ENCODE measurements at regions of chr11 and their contacts with region 1.

Region 1: DNA sequence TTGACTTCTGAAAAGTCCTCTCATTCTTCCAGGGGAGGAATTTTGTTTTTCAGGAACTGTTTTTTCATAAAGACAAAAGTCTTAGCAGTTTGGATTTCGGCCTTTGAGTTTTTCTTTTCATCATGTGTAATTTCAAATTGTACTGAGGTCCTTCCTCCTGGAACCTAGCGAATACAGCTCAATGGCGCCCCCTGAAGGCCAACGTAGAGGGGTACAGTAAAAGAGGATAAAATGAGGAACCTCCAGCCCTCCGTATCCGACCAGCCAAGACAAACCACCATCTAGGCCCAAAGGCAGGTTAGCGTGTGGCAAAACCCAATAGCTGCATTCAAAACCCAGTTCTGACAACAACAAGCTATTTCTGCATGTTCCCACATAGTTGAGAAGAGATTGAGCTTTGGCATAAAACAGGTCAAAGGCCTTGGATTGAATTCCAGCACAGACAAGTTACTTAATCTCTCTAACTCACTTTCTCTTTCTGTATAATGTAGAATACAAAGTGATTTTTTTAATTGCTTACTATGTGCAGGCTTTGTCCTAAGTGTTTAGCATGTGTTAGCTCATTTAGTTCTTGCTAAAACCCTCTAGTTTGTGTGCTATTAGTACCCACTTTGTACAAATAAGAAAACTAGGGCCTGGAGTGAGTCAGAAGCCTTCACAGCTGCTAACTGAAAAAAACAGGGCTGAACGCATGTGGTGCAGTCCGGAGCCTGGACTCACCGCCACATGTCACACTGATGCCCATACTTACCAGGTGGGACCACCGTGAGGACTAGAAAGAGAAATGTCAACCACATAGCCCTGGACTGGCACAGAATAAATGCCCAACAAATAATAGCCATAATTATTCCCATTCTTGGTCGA is 43.2 kb upstream of the ETS1 start:
- DNase-seq: peak; percentile 93
- H3K4me3 Mint-ChIP-seq: peak overlapping the region; percentile 68
- H3K27ac Mint-ChIP-seq: peak overlapping the region; percentile 80
- H3K4me1 Mint-ChIP-seq: peaks cover 66% of the 10 kb centered on the region
- H3K27me3 Mint-ChIP-seq: peaks cover 3% of the 10 kb centered on the region

Region 2: GRCh38 chr11:128195057-128195751 is 435.4 kb before region 1 on chr11:
- CTCF ChIA-PET with region 1: interaction called, 34 read pairs
- DNase-seq: peak; percentile 74
- H3K4me3 Mint-ChIP-seq: no peak overlapping the region
- H3K27ac Mint-ChIP-seq: peak overlapping the region; percentile 2
- H3K4me1 Mint-ChIP-seq: peaks cover 47% of the 10 kb centered on the region
- H3K27me3 Mint-ChIP-seq: no peaks in the 10 kb centered on the region

Region 3: GRCh38 chr11:128463371-128463829 is 167.2 kb before region 1 on chr11:
- CTCF ChIA-PET with region 1: interaction called, 11 read pairs
- DNase-seq: no peak
- H3K4me3 Mint-ChIP-seq: peak overlapping the region; percentile 36
- H3K27ac Mint-ChIP-seq: peak overlapping the region; percentile 92
- H3K4me1 Mint-ChIP-seq: peaks cover 93% of the 10 kb centered on the region
- H3K27me3 Mint-ChIP-seq: no peaks in the 10 kb centered on the region

Region 4: GRCh38 chr11:128497061-128497775 is 133.4 kb before region 1 on chr11:
- CTCF ChIA-PET with region 1: interaction called, 16 read pairs
- DNase-seq: no peak
- H3K4me3 Mint-ChIP-seq: peak overlapping the region; percentile 69
- H3K27ac Mint-ChIP-seq: peak overlapping the region; percentile 91
- H3K4me1 Mint-ChIP-seq: peaks cover 97% of the 10 kb centered on the region
- H3K27me3 Mint-ChIP-seq: no peaks in the 10 kb centered on the region

Region 5: DNA sequence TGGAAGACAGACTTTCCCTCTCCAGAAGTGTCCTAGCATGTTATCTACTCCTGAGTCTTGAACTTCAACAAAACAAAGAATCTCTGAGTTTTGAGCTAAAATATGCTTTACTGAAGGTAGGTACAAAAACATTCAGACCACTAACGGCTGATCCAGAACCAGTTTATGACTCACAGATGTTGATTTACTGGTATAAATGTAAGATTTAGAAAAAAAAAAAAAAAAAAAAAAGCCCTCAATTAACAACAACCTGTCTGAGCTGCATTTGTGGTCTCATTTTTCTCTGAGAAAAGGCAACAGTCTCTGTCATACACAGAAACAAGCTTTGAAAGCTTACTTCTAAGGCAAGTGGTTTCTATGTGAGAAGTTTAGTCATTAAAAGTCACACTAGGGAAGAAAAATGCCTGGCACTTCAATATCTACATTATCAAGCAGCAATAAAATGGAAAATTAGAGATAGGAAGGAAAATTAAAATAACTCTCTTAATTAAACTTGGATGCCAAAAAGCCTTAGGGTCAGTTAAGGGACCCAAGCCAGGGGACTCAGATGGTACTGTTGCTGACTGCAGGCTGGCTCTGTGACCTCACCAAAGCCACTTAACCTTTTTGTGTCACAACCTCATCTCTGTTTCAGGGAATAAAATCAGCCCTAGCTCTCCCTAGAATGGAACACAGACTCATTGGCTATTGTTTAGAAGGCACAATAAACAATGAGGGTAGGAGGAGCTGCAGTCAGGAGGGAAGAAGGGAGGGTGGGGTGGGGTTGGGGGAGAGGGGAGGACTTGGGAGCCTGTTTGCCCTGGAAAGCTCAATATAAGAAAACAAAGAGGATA is 105.0 kb before region 1 on chr11:
- CTCF ChIA-PET with region 1: interaction called, 11 read pairs
- DNase-seq: peak; percentile 58
- H3K4me3 Mint-ChIP-seq: peak overlapping the region; percentile 59
- H3K27ac Mint-ChIP-seq: peak overlapping the region; percentile 100
- H3K4me1 Mint-ChIP-seq: peaks cover 71% of the 10 kb centered on the region
- H3K27me3 Mint-ChIP-seq: no peaks in the 10 kb centered on the region

Region 6: DNA sequence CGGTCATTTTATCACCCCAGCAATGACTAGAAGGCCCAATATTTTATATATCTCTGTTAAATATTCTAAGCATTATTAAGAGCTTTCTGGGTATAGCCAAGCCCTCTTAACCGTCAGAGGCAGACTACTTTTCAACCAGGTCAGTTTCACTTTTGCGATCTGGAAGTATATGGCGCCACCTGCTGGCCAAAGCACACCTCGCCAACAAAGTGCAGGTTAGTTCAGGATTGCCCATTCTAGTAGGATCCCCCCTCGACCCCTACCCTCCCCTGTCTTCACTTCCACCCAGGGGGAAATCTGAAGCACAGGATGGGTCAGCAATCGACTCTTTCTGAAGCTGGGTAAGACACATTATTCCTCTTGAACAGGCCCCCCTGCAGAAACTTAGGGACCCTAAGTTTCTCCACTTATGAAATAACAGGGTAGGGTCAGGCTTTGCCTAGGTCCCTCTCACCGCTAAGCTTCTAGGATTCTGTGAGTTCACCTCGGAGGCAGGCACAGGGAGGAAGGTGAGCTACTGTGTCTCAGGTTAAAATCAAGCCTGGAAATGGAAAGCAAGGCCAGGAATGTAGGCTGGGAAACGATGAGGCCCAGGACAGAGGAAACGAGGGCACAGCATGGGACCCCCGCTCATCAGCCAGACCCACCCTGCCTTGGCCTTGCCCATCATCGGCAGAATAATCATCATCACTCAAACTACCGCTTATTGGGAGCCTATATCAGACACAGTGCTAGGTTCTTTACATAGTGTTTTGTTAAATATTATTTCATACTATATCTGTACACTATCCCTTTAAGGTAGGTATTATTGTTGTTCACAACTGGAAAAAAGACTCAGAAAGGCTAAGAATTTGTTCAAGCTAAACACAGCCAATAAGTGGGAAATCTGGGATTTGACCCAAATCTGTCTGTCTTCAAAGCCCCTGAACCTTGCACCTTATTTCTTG is 200.8 kb after region 1 on chr11:
- CTCF ChIA-PET with region 1: interaction called, 77 read pairs
- DNase-seq: peak; percentile 91
- H3K4me3 Mint-ChIP-seq: peak overlapping the region; percentile 33
- H3K27ac Mint-ChIP-seq: peak overlapping the region; percentile 86
- H3K4me1 Mint-ChIP-seq: peaks cover 37% of the 10 kb centered on the region
- H3K27me3 Mint-ChIP-seq: peaks cover 8% of the 10 kb centered on the region

Measured in activated naive CD4-positive, alpha-beta T cell treated with anti-CD3 and anti-CD28 coated beads, Interleukin-2, amount 10 ng/mL, durations not matched to agents 7 days and 5 days (primary cell).